Panc1 (cell line): ENCODE measurements at regions of chr11 and their contacts with region 1.

Region 1: DNA sequence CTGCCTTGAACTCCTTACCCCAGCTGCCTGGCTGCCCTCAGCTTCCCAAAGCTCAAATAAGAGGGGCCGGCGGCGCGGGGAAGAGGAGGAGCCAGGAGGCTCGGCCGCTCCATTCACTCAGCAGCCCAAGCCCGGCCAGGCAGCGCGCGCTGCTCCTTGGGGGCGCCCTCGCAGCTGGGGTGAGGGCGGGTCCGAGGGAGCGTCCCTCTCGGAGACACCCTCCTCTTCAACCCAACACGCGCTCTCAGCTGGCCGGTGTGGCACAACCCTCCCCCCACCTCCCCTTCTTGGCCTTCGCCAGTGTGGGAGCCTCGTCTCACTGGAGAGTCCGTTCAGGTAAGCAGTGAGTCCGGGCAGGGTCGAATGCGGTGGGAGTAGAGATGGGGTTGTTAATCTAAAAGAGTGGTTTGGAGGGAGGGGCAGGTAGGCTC is at the start of gene WT1:
- DNase-seq: no peak
- ATAC-seq: peak; percentile 83
- H3K4me3 ChIP-seq: peak within 1 kb of the TSS; percentile 50 to 78
- H3K27ac ChIP-seq: peak within 1 kb of the TSS; percentile 88
- H3K4me1 ChIP-seq: peaks cover 7% of the 10 kb centered on the region
- H3K27me3 ChIP-seq: no peaks in the 10 kb centered on the region
- CTCF ChIP-seq: no peak; the same call in 1 of the 2 replicates
- total RNA-seq, gene WT1: 15.9 TPM

Region 2: GRCh38 chr11:31817621-31818424 is 617.7 kb before region 1 on chr11:
- CTCF ChIA-PET with region 1: no interaction called
- POLR2A ChIA-PET with region 1: no interaction called
- in situ Hi-C with region 1: no loop called
- intact Hi-C with region 1: no loop called
- DNase-seq: no peak
- ATAC-seq: no peak
- H3K4me3 ChIP-seq: no peak overlapping the region
- H3K27ac ChIP-seq: no peak overlapping the region
- H3K4me1 ChIP-seq: no peaks in the 10 kb centered on the region
- H3K27me3 ChIP-seq: peaks cover 6% of the 10 kb centered on the region; the same call in 1 of the 2 replicates
- CTCF ChIP-seq: no peak

Region 3: DNA sequence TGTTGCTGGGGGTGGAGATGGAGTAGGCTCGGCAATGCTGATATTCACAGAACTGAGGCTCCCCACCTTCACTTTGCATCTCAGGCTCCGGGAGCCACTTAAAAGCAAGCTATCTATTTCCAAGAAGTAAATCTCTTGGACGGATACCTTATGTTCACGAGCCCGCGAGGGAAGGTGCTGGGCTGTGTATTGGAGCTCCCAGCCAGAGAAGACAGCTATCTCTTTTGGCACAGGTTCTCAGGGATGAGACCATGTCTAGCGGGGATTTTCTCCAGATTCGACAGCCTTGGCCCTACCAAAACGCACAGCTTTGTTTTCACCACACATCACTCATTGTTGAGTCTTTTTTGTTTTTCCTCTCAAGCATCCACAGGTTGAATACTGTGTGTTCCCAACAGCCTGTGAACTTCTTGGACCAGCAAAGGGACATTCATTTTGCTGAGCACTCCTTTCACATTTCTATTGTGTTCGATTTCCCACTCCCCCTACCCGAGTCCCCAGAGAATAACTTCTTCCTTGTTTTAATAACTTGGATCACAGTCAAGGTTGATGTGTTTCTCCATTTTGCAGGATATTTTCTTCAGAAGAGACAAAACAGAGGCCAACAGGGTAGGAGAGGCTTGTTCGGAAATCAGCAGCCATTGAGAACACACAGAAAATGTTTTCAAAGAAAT is 23.4 kb before region 1 on chr11:
- CTCF ChIA-PET with region 1: interaction called, 4 read pairs
- POLR2A ChIA-PET with region 1: interaction called, 11 read pairs
- in situ Hi-C with region 1: no loop called
- intact Hi-C with region 1: no loop called
- DNase-seq: no peak
- ATAC-seq: no peak
- H3K4me3 ChIP-seq: no peak overlapping the region
- H3K27ac ChIP-seq: no peak overlapping the region
- H3K4me1 ChIP-seq: no peaks in the 10 kb centered on the region
- H3K27me3 ChIP-seq: no peaks in the 10 kb centered on the region
- CTCF ChIP-seq: no peak

Region 4: DNA sequence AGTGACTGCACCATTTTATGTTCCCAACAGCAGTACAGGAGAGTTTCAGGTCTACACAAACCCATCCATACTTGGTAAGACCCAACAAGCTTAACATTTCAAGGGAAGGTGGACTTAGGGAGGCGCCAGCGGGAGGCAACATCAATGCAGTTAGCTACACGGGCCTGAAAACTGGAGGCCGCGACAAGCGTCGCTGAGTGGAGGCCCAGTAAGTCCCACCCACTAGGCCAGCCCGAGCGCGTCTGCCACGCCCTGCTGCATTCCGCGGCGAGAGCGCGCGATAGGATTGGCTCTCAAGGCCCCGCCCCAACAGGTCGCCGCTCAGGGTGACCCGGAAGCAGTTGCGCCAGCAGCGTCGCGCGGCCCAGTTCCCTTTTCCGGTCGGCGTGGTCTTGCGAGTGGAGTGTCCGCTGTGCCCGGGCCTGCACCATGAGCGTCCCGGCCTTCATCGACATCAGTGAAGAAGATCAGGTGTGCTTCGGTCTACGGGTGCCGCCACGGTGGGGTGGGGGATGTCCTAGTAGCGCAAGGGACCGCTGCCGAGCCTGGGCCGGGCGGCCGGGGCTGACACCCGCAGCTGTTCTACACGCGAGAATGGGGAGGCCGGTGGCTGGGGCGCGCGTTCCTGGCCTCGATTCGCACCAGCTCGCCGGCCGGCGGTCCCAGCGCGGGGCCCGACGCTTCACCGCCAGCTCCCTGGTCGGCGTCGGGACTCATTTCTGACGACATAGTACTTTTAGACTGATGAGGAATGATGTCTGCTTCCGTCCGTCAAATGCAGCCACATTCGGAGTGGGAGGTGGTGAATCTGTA is 148.1 kb after region 1 on chr11 and contains the start of gene EIF3M:
- CTCF ChIA-PET with region 1: no interaction called
- POLR2A ChIA-PET with region 1: no interaction called
- in situ Hi-C with region 1: no loop called
- intact Hi-C with region 1: loop called (anchors 2 kb)
- DNase-seq: peak; percentile 82
- ATAC-seq: peak; percentile 100
- H3K4me3 ChIP-seq: peak within 1 kb of the TSS; percentile 92 to 93
- H3K27ac ChIP-seq: peak within 1 kb of the TSS; percentile 98
- H3K4me1 ChIP-seq: peaks cover 20% of the 10 kb centered on the region
- H3K27me3 ChIP-seq: no peaks in the 10 kb centered on the region
- CTCF ChIP-seq: no peak
- total RNA-seq, gene EIF3M: 270 TPM